ENCODE measurements at regions of chr16 and their contacts with region 1.

Region 1: GRCh38 chr16:2838928-2839327 is 8.8 kb downstream of the ZG16B start:
- DNase-seq: peak; percentile 34 to 81 (median 66)
- ATAC-seq: peak in 3 of 4 donors; percentile 74 to 88 (median 80)
- H3K4me3 ChIP-seq: no peak overlapping the region
- H3K27ac ChIP-seq: no peak overlapping the region
- H3K4me1 ChIP-seq: peaks cover 0 to 26% (median 10%) of the 10 kb centered on the region in 12 donors
- H3K27me3 ChIP-seq: no peaks in the 10 kb centered on the region
- CTCF ChIP-seq: peak; percentile 57 to 77 (median 67)
- POLR2A ChIP-seq: no peak

Region 2: DNA sequence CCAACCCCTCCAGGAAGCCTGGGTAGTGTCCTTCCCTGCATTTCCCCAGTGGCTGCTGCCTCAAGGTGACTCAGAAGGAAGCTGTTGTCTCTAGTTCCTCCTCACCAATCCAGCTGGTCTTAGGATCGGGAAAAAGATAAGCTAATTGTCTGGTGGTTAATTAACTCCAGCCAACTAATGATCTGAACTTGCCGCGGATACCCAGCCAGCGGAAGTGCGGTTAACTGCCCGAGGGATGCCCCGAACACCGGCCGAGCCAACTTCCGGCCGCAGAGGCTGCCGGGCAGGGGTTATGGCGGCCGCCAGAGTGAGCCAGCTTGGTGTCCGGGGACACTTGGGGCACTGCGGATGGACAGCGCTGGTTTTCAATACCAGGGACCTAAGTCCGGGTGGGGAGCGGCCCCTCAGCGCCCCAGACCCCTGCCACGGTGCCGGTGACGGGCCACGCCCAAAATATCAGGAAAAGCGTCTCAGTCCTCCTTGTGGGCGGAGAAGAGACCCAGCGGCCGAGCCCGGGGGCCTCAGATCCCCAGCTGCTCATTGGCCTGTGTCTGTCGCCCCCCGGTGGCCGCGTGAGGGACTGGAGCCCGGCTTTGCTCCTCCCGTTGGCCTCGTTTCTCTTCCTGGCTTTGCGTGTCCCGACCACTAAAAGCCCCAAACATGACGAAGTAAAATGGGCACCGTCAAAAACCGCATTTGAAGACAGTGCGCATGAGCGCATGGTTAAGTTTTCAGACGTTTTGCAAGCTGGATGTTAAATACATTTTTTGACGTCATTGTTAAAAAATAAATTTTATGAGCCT is 29.3 kb after region 1 on chr16:
- intact Hi-C with region 1: loop called in 2 of 10 experiments (anchors 1 to 2 kb)
- DNase-seq: peak; percentile 93 to 97 (median 94)
- ATAC-seq: peak; percentile 96 to 99 (median 98)
- H3K4me3 ChIP-seq: peak overlapping the region; percentile 47 to 84 (median 72)
- H3K27ac ChIP-seq: peak overlapping the region; percentile 88 to 98 (median 94)
- H3K4me1 ChIP-seq: peaks cover 0 to 16% (median 3%) of the 10 kb centered on the region in 12 donors
- H3K27me3 ChIP-seq: peaks cover 0 to 19% (median 0%) of the 10 kb centered on the region in 9 donors
- CTCF ChIP-seq: peak; percentile 97 to 99 (median 98)
- POLR2A ChIP-seq: peak in 1 of 2 donors; percentile 50

Region 3: GRCh38 chr16:2911580-2912329 is 72.8 kb after region 1 on chr16 and contains the start of gene FLYWCH1:
- intact Hi-C with region 1: loop called in 1 of 10 experiments (anchors 10 kb)
- DNase-seq: peak; percentile 98 to 99 (median 99)
- ATAC-seq: peak; percentile 94 to 99 (median 98)
- H3K4me3 ChIP-seq: peak within 1 kb of the TSS; percentile 64 to 97 (median 92)
- H3K27ac ChIP-seq: peak within 1 kb of the TSS; percentile 72 to 95 (median 90)
- H3K4me1 ChIP-seq: peaks cover 0 to 34% (median 14%) of the 10 kb centered on the region in 12 donors
- H3K27me3 ChIP-seq: no peaks in the 10 kb centered on the region
- CTCF ChIP-seq: no peak
- POLR2A ChIP-seq: peak in 1 of 2 donors; percentile 90
- total RNA-seq, gene FLYWCH1: 26.3 to 48.4 (median 34.2) TPM

Region 4: DNA sequence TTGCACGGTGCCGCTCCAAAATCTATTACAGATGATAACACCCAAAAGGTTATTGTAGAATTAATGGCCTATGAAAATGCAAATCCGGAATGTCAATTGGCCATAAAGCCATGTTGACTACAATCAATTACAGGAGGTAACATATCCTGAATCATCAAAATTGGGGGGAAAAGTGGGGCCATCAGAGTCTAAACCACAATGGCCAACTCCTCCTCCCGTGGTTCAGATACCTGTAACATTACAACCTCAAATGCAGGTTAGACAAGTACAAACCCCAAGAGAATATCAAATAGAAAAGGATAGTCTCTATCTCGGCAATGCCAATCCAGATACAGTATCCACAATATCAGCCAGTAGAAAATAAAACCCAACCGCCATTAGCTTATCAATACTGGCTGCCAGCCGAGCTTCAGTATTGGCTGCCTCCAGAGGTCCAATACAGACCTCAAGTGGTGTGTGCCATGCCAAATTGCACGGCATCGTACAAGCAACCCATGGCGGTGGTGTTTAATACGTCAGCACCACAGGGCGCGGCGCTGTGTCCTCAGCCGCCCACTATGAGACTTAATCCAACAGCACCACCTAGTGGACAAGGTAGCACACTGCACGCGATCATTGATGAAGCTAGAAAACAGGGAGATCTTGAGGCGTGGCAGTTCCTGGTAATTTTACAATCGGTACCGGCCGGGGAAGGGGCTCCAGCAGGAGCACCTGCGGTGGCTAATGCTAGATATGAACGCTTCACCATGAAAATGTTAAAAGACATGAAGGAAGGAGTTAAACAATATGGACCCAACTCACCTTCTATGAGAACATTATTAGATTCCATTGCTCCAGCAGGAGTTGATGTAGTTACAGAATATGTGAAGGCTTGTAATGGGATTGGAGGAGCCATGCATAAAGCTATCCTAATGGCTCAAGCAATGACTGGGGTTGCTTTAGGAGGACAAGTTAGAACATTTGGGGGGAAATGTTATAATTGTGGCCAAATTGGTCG is 88.0 kb after region 1 on chr16:
- intact Hi-C with region 1: loop called in 1 of 10 experiments (anchors 2 kb)
- DNase-seq: peak; percentile 77 to 91 (median 86)
- ATAC-seq: peak; percentile 81 to 93 (median 91)
- H3K4me3 ChIP-seq: peak overlapping the region in 8 of 12 donors; percentile 7 to 51 (median 24)
- H3K27ac ChIP-seq: no peak overlapping the region
- H3K4me1 ChIP-seq: peaks cover 0 to 12% (median 3%) of the 10 kb centered on the region in 12 donors
- H3K27me3 ChIP-seq: no peaks in the 10 kb centered on the region
- CTCF ChIP-seq: peak; percentile 86 to 99 (median 96)
- POLR2A ChIP-seq: no peak

Region 5: DNA sequence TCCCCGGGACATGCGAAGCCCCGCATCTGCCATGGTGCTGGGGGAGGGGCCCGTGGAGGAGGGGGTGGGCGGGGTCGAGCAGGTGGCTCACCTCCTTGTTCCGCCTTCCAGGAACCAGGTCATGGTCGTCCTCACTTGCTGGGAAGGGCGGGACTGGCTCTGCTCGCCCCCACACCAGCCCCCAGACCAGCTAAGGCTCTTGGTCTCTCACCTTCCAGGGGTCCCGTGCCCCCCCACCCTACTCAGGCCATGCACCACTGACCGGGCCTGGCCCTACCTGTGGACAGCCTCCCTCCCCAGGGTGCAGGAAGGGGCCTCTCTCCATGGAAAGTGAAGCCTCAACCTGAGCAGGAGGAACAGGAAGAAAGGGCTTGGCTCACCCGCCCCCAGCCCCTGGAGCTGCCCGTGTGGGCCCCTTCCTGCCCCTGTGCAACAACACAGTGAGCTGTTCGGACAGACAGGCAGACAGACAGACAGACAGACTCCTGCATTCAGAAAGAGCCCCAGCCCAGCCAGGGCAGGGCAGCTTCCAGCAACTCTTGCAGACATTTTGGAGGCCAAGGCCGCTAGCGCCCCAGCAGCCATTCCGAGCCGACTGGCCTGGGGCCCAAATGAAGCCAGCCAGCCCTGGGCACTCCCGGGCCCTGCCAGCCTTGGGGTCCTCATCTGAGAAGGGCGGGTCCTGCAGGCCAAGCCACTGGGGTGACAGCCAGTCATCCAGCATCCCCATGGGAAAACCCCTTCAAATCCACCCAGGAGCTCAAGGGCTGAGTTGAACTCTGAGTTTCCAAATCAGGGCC is 117.1 kb after region 1 on chr16:
- intact Hi-C with region 1: no loop called
- DNase-seq: no peak
- ATAC-seq: no peak
- H3K4me3 ChIP-seq: no peak overlapping the region
- H3K27ac ChIP-seq: no peak overlapping the region
- H3K4me1 ChIP-seq: no peaks in the 10 kb centered on the region
- H3K27me3 ChIP-seq: peaks cover 12 to 71% (median 25%) of the 10 kb centered on the region in 9 donors
- CTCF ChIP-seq: no peak
- POLR2A ChIP-seq: no peak